Activated B cell treated with CpG ODN at 0.5 μM for 24 hours (primary cell): ENCODE measurements at regions of chr12 and their contacts with region 1.

Region 1: GRCh38 chr12:118372541-118373495 is at the start of gene TAOK3:
- DNase-seq: peak; percentile 90
- ATAC-seq: peak; percentile 87
- H3K4me3 Mint-ChIP-seq: peak within 1 kb of the TSS; percentile 94
- H3K27ac Mint-ChIP-seq: peak within 1 kb of the TSS; percentile 95
- H3K4me1 Mint-ChIP-seq: peaks cover 43% of the 10 kb centered on the region
- H3K27me3 Mint-ChIP-seq: no peaks in the 10 kb centered on the region
- CTCF ChIP-seq: no peak
- total RNA-seq, gene TAOK3: 76.3 and 86.9 TPM in 2 replicates

Region 2: GRCh38 chr12:116818948-116819832 is 1553.6 kb before region 1 on chr12:
- CTCF ChIA-PET with region 1: no interaction called
- POLR2A ChIA-PET with region 1: no interaction called
- intact Hi-C with region 1: loop called (anchors 10 kb)
- DNase-seq: peak; percentile 88
- ATAC-seq: peak; percentile 85
- H3K4me3 Mint-ChIP-seq: peak overlapping the region; percentile 94
- H3K27ac Mint-ChIP-seq: peak overlapping the region; percentile 93
- H3K4me1 Mint-ChIP-seq: peaks cover 56% of the 10 kb centered on the region
- H3K27me3 Mint-ChIP-seq: no peaks in the 10 kb centered on the region
- CTCF ChIP-seq: no peak

Region 3: DNA sequence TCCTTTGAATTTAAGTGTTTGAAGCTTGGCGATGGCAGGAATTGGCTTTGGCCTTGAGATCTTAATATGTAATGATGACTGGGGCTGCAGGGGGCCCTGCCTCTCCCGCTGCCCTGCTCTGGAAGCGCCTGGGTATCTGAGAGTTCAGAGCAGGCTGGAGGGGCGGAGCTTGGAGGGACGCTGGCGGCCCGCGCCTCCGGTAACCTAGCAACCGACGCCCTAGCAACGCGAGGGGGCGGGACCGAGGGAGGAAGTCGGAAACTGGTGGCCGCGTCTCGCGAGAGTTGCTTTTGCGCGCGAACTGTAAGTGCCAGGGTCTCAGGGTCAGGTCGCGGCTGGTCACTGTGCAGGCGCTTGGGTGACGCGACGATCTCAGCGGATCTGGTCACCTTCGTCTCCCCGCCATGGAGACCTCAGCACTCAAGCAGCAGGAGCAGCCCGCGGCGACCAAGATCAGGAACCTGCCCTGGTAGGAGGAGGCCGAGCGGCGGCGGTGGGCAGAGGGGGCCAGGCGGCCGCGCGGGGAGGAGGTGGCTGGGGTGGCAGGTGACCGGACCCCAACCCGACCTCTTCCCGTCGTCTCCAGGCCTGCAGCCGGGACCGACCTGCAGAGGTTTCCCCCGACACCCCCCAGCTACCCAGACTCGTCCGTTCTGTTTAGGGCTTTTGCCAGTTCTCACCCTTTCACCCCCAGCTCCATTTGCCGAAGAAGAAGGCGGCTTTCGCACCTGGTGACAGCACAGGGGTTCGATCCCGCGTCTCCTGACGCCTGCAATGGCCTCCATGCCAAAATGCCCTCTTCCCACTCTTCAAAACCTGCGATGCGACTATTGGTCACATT is 356.2 kb before region 1 on chr12 and contains the start of gene RFC5:
- CTCF ChIA-PET with region 1: no interaction called
- POLR2A ChIA-PET with region 1: interaction called, 3 read pairs
- intact Hi-C with region 1: loop called (anchors 1 kb)
- DNase-seq: peak; percentile 97
- ATAC-seq: peak; percentile 97
- H3K4me3 Mint-ChIP-seq: peak within 1 kb of the TSS; percentile 89
- H3K27ac Mint-ChIP-seq: peak within 1 kb of the TSS; percentile 76
- H3K4me1 Mint-ChIP-seq: peaks cover 20% of the 10 kb centered on the region
- H3K27me3 Mint-ChIP-seq: no peaks in the 10 kb centered on the region
- CTCF ChIP-seq: no peak
- total RNA-seq, gene RFC5: 17.5 and 20.1 TPM in 2 replicates

Region 4: DNA sequence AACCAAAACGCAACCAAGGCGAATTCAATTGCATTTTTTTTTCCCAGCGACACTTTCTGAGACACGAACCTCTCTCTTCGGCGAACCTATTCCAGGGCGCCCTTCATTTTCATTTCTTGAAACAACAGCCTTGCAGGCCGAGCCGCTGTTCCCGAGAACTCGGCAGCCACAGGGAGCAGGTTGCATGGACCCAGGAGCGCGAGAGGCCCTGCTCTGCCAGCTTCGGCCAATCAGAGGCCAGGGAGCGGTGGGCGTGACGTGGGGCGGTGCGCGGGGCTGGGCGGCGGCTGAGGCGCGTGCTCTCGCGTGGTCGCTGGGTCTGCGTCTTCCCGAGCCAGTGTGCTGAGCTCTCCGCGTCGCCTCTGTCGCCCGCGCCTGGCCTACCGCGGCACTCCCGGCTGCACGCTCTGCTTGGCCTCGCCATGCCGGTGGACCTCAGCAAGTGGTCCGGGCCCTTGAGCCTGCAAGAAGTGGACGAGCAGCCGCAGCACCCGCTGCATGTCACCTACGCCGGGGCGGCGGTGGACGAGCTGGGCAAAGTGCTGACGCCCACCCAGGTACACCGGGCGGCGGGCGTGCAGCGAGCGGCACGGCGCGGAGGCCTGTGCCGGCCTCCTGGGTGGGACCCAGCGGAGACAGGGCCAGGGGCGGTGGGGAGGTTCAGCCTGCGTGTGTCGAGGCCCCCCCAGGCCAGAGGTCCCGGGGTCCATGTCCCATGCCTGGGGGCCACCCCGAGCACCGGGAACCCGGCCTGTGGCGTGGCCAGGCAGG is 236.8 kb before region 1 on chr12 and contains the start of gene PEBP1:
- CTCF ChIA-PET with region 1: interaction called, 5 read pairs
- POLR2A ChIA-PET with region 1: interaction called, 21 read pairs
- intact Hi-C with region 1: loop called (anchors 1 kb)
- DNase-seq: peak; percentile 91
- ATAC-seq: peak; percentile 99
- H3K4me3 Mint-ChIP-seq: peak within 1 kb of the TSS; percentile 98
- H3K27ac Mint-ChIP-seq: peak within 1 kb of the TSS; percentile 86
- H3K4me1 Mint-ChIP-seq: peaks cover 20% of the 10 kb centered on the region
- H3K27me3 Mint-ChIP-seq: no peaks in the 10 kb centered on the region
- CTCF ChIP-seq: no peak
- total RNA-seq, gene PEBP1: 102 and 114 TPM in 2 replicates

Region 5: GRCh38 chr12:118183705-118184104 is 189.1 kb before region 1 on chr12:
- CTCF ChIA-PET with region 1: interaction called, 124 read pairs
- POLR2A ChIA-PET with region 1: interaction called, 11 read pairs
- intact Hi-C with region 1: loop called (anchors 1 kb)
- DNase-seq: no peak
- ATAC-seq: no peak
- H3K4me3 Mint-ChIP-seq: no peak overlapping the region
- H3K27ac Mint-ChIP-seq: no peak overlapping the region
- H3K4me1 Mint-ChIP-seq: peaks cover 24% of the 10 kb centered on the region
- H3K27me3 Mint-ChIP-seq: no peaks in the 10 kb centered on the region
- CTCF ChIP-seq: no peak

Region 6: GRCh38 chr12:118237052-118237665 is 135.7 kb before region 1 on chr12:
- CTCF ChIA-PET with region 1: interaction called, 8 read pairs
- POLR2A ChIA-PET with region 1: interaction called, 18 read pairs
- intact Hi-C with region 1: loop called (anchors 1 kb)
- DNase-seq: no peak
- ATAC-seq: peak; percentile 90
- H3K4me3 Mint-ChIP-seq: peak overlapping the region; percentile 77
- H3K27ac Mint-ChIP-seq: peak overlapping the region; percentile 89
- H3K4me1 Mint-ChIP-seq: peaks cover 45% of the 10 kb centered on the region
- H3K27me3 Mint-ChIP-seq: no peaks in the 10 kb centered on the region
- CTCF ChIP-seq: no peak

Region 7: GRCh38 chr12:118346895-118347294 is 25.9 kb before region 1 on chr12:
- CTCF ChIA-PET with region 1: interaction called, 13 read pairs
- POLR2A ChIA-PET with region 1: interaction called, 10 read pairs
- intact Hi-C with region 1: no loop called
- DNase-seq: peak; percentile 24
- ATAC-seq: peak; percentile 92
- H3K4me3 Mint-ChIP-seq: peak overlapping the region; percentile 73
- H3K27ac Mint-ChIP-seq: peak overlapping the region; percentile 91
- H3K4me1 Mint-ChIP-seq: peaks cover 55% of the 10 kb centered on the region
- H3K27me3 Mint-ChIP-seq: no peaks in the 10 kb centered on the region
- CTCF ChIP-seq: no peak